IMR-90 (cell line): ENCODE measurements at regions of chr10 and their contacts with region 1.

Region 1: DNA sequence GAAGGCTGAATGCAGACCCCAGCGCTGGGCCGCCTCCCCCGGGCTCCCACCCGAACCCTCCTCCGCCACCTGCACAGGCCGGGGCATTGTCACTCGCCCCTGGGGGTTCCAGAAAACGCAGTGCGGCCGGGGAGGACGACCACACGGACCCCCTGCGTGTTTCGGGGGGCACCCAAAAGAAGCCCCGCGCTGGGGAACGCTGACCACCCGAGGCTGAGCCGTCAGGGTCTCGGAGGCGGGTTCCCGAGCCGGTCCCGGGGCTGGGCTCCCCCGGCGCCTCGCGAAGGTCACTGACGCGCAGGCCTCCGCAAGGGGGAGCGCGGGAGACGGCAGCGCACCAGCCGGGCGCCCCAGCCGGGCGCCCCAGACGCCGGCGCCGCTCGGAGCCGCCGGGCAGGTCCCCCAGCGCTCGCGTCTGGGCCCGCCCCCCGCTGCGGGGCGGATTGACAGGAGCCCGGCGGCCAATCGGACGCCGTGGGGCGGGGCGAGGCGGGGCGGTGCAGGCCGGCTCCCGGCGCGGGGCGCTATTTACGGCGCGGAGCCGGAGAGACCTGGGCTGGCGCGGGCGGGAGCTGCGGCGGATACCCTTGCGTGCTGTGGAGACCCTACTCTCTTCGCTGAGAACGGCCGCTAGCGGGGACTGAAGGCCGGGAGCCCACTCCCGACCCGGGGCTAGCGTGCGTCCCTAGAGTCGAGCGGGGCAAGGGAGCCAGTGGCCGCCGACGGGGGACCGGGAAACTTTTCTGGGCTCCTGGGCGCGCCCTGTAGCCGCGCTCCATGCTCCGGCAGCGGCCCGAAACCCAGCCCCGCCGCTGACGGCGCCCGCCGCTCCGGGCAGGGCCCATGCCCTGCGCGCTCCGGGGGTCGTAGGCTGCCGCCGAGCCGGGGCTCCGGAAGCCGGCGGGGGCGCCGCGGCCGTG is at the start of gene BAMBI:
- DNase-seq: peak; percentile 89
- ATAC-seq: peak; percentile 96
- H3K4me3 ChIP-seq: peak within 1 kb of the TSS; percentile 89
- H3K27ac ChIP-seq: peak within 1 kb of the TSS; percentile 44
- H3K4me1 ChIP-seq: peaks cover 6% of the 10 kb centered on the region
- H3K27me3 ChIP-seq: peaks cover 34% of the 10 kb centered on the region
- CTCF ChIP-seq: peak; percentile 83
- POLR2A ChIP-seq: peak; percentile 97
- RAD21 ChIP-seq: peak; percentile 78
- total RNA-seq, gene BAMBI: 19.4 and 20.8 TPM in 2 replicates

Region 2: DNA sequence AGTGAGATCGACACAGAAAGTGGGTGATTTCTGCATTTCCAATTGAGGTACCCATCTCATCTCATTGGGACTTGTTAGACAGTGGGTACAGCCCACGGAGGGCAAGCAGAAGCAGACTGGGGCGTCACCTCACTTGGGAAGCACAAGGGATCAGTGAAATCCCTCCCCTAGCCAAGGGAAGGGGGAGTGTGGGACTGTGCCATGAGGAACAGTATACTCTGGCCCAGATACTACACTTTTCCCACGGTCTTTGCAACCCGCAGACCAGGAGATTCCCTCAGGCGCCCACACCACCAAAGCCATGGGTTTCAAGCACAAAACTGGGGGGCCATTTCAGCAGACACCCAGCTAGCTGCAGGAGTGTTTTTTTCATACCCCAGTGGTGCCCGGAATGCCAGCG is 778.2 kb before region 1 on chr10:
- CTCF ChIA-PET with region 1: no interaction called
- POLR2A ChIA-PET with region 1: no interaction called
- dilution Hi-C with region 1: no loop called
- in situ Hi-C with region 1: no loop called
- intact Hi-C with region 1: no loop called
- DNase-seq: no peak
- ATAC-seq: no peak
- H3K4me3 ChIP-seq: no peak overlapping the region
- H3K27ac ChIP-seq: no peak overlapping the region
- H3K4me1 ChIP-seq: no peaks in the 10 kb centered on the region
- H3K27me3 ChIP-seq: peaks cover 2% of the 10 kb centered on the region; the same call in 1 of the 2 replicates
- CTCF ChIP-seq: no peak
- POLR2A ChIP-seq: no peak
- RAD21 ChIP-seq: no peak

Region 3: DNA sequence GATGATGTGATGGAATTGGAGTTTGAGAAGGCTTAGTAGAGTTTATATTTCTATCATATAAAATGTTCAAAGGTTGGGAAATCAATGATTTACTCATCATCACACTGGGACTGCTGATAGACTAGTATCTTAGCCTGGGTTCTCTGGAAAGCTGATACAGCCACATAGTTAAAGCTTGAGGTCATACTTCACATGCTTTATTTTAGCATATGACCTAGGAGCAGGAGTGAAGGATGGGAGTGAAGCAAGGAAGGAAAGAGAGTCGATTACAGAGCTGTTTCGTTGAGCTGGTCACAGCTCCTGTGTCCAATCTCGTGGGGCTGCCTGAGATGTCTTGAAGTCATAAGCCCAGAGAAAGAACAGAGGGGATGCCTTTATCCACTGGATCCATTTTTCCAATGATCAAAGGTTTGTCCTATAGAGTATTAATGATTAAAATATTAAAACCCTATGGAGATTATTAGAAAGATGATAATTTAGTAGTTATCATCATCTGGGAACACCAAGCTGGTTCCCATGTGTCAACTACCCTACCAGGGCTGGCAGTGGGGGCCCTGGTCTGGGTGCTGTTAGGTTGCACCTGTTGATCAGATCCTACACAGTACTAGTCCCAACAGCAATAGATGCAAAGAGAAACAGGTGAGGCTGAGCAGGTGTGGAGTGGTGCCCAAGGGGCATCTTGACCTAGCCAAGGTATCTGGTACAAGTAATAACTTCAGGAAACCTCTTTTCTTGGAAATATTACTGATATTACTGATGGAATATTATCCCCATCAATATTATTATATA is 77.9 kb after region 1 on chr10:
- CTCF ChIA-PET with region 1: no interaction called
- POLR2A ChIA-PET with region 1: no interaction called
- dilution Hi-C with region 1: no loop called
- in situ Hi-C with region 1: no loop called
- intact Hi-C with region 1: no loop called
- DNase-seq: peak; percentile 67
- ATAC-seq: peak; percentile 91
- H3K4me3 ChIP-seq: no peak overlapping the region
- H3K27ac ChIP-seq: no peak overlapping the region
- H3K4me1 ChIP-seq: peaks cover 5% of the 10 kb centered on the region; the same call in 1 of the 2 replicates
- H3K27me3 ChIP-seq: no peaks in the 10 kb centered on the region; the same call in 1 of the 2 replicates
- CTCF ChIP-seq: no peak
- POLR2A ChIP-seq: no peak
- RAD21 ChIP-seq: no peak

Region 4: GRCh38 chr10:28839600-28840007 is 162.4 kb after region 1 on chr10:
- CTCF ChIA-PET with region 1: interaction called, 4 read pairs
- POLR2A ChIA-PET with region 1: no interaction called
- dilution Hi-C with region 1: no loop called
- in situ Hi-C with region 1: no loop called
- intact Hi-C with region 1: loop called (anchors 2 kb)
- DNase-seq: peak; percentile 79
- ATAC-seq: peak; percentile 8; the same call in 1 of the 2 replicates
- H3K4me3 ChIP-seq: no peak overlapping the region
- H3K27ac ChIP-seq: no peak overlapping the region
- H3K4me1 ChIP-seq: peaks cover 12% of the 10 kb centered on the region
- H3K27me3 ChIP-seq: no peaks in the 10 kb centered on the region
- CTCF ChIP-seq: no peak
- POLR2A ChIP-seq: no peak
- RAD21 ChIP-seq: no peak

Region 5: DNA sequence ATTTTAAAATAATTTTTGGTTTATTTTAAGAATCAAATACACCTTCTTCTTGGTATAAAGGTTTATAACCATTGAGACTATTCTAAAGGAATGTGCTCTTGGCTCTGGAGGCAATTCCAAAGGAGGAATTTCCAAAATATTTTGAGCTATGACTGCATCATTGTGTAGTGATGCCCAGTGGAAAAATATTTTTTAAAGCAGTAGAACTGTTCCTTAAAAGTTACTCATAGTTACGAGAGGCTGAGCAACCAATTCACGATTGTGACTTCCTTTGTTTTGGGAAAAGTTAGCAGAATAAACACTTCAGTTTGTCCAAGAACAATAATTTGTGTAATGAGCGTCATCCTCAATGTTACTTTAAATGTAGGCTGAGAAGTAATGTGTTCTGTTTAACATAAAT is 233.7 kb after region 1 on chr10:
- CTCF ChIA-PET with region 1: no interaction called
- POLR2A ChIA-PET with region 1: no interaction called
- dilution Hi-C with region 1: no loop called
- in situ Hi-C with region 1: no loop called
- intact Hi-C with region 1: loop called (anchors 2 kb)
- DNase-seq: peak; percentile 85
- ATAC-seq: peak; percentile 71
- H3K4me3 ChIP-seq: no peak overlapping the region
- H3K27ac ChIP-seq: no peak overlapping the region
- H3K4me1 ChIP-seq: peaks cover 10% of the 10 kb centered on the region
- H3K27me3 ChIP-seq: no peaks in the 10 kb centered on the region
- CTCF ChIP-seq: no peak
- POLR2A ChIP-seq: no peak
- RAD21 ChIP-seq: no peak

Region 6: GRCh38 chr10:28991326-28992270 is 314.4 kb after region 1 on chr10:
- CTCF ChIA-PET with region 1: interaction called, 3 read pairs
- POLR2A ChIA-PET with region 1: no interaction called
- dilution Hi-C with region 1: no loop called
- in situ Hi-C with region 1: loop called (anchors 10 kb)
- intact Hi-C with region 1: loop called (anchors 1 kb)
- DNase-seq: peak; percentile 78
- ATAC-seq: peak; percentile 93
- H3K4me3 ChIP-seq: no peak overlapping the region
- H3K27ac ChIP-seq: no peak overlapping the region; the same call in 1 of the 2 replicates
- H3K4me1 ChIP-seq: peaks cover 4% of the 10 kb centered on the region
- H3K27me3 ChIP-seq: no peaks in the 10 kb centered on the region
- CTCF ChIP-seq: peak; percentile 70
- POLR2A ChIP-seq: no peak
- RAD21 ChIP-seq: peak; percentile 85

Region 7: DNA sequence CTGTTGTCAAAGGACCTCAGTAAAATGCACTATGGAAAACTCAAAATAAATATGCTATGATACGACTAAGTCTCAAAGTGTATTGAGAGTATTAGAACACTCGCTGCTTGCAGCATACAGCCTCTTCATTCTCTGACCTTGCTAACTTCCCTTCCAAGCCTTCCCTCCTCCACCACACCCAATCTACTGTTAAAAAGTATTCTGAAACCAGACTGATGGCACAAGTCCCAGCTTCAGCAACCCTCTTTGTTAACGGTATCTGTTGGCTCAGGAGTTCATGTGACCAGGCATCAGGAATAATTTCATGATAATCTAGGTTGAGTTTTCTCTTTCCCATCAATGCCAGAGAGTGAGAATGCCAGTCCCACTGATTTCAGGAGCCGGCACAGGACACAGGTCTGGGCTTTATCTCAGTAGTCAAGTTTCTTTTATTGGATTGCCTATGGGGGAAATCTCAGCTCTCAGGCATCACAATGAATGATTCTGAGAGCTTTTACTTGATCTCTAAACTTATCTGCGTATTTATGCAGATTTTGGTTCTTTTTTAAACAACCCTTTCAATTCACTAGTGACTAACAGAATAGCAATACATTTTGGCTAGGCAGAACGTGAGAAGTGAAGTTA is 380.6 kb after region 1 on chr10:
- CTCF ChIA-PET with region 1: interaction called, 3 read pairs
- POLR2A ChIA-PET with region 1: no interaction called
- dilution Hi-C with region 1: no loop called
- in situ Hi-C with region 1: no loop called
- intact Hi-C with region 1: loop called (anchors 5 kb)
- DNase-seq: peak; percentile 16
- ATAC-seq: peak; percentile 62
- H3K4me3 ChIP-seq: no peak overlapping the region
- H3K27ac ChIP-seq: 0 out of 2 replicates have a peak overlapping the region, but pooled peaks have one; percentile 1
- H3K4me1 ChIP-seq: no peaks in the 10 kb centered on the region
- H3K27me3 ChIP-seq: peaks cover 19% of the 10 kb centered on the region
- CTCF ChIP-seq: no peak
- POLR2A ChIP-seq: no peak
- RAD21 ChIP-seq: no peak

Region 8: GRCh38 chr10:29257106-29257783 is 580.0 kb after region 1 on chr10:
- CTCF ChIA-PET with region 1: no interaction called
- POLR2A ChIA-PET with region 1: no interaction called
- dilution Hi-C with region 1: no loop called
- in situ Hi-C with region 1: no loop called
- intact Hi-C with region 1: loop called (anchors 5 kb)
- DNase-seq: peak; percentile 86
- ATAC-seq: peak; percentile 93
- H3K4me3 ChIP-seq: no peak overlapping the region
- H3K27ac ChIP-seq: peak overlapping the region; percentile 42; the same call in 1 of the 2 replicates
- H3K4me1 ChIP-seq: peaks cover 12% of the 10 kb centered on the region
- H3K27me3 ChIP-seq: peaks cover 51% of the 10 kb centered on the region
- CTCF ChIP-seq: no peak
- POLR2A ChIP-seq: no peak
- RAD21 ChIP-seq: no peak